MCF 10A (cell line): ENCODE measurements at regions of chr6 and their contacts with region 1.

Region 1: GRCh38 chr6:79453558-79454042 is 83.6 kb downstream of the LCA5 start:
- DNase-seq: peak; percentile 89
- H3K4me3 Mint-ChIP-seq: peak overlapping the region; percentile 61
- H3K27ac Mint-ChIP-seq: peak overlapping the region; percentile 94
- H3K4me1 Mint-ChIP-seq: peaks cover 33% of the 10 kb centered on the region
- H3K27me3 Mint-ChIP-seq: no peaks in the 10 kb centered on the region
- CTCF ChIP-seq: no peak

Region 2: DNA sequence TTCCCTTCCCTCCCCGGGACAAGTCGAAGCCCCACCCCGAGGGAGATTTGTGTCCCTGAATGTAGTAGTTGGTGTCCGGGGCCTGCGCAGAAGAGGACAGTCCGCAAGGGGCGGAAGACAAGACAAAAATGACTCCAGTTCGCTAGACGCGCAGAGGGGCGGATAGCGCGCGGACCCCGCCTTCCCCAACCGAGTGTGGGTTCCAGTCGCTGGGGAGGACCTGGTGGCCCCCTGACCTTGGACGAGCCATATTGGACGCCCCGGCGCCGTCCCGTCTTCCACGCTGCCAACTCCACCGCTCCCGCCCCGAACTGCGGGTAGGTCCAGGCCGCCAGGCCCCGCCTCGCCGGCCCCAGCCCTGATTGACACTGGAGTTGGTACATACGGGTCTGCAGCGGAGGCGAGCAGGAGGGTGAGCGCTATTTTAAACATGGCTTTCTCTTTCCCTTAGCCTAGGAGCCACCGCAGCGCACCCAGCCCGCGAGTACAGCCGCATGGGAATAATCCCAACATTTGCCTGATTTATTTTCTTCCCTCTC is 219.9 kb before region 1 on chr6:
- CTCF ChIA-PET with region 1: interaction called, 4 read pairs
- POLR2A ChIA-PET with region 1: interaction called, 5 read pairs
- intact Hi-C with region 1: loop called (anchors 5 kb)
- DNase-seq: peak; percentile 90
- H3K4me3 Mint-ChIP-seq: peak overlapping the region; percentile 88
- H3K27ac Mint-ChIP-seq: peak overlapping the region; percentile 81
- H3K4me1 Mint-ChIP-seq: peaks cover 13% of the 10 kb centered on the region
- H3K27me3 Mint-ChIP-seq: no peaks in the 10 kb centered on the region
- CTCF ChIP-seq: peak; percentile 19

Region 3: DNA sequence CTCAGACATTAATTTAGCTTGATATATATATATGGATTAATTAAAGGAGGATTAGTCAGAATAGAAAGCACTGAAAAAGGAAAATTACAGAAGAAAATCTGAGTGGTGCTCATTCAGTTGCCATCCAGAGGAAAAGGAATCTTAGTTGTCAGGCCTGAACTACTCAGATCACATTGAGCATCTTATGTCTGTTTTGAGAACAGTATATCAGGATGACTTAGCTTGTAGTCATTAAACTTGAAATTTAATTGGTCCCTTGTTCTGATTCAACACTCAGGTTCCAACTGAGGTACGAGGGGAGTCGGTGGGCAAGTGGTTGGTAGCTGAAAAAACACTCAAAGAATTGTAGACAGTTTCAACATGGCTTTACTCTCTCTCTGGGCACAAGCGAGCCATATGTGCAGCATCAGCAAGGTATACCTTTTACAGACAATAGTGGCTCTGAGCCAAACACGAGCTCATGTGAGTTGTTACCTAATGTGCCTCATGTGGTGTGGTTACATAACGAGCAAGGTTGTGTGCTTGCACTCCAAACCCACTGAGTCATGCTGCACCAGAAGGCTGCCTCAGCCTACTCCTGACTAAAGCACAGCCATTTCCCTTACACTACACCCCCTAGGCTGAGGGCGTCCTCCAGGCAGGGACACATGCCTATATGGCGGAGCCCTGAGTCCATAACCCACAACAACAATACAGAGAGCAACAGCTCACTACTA is 146.1 kb before region 1 on chr6:
- CTCF ChIA-PET with region 1: no interaction called
- POLR2A ChIA-PET with region 1: interaction called, 11 read pairs
- intact Hi-C with region 1: no loop called
- DNase-seq: peak; percentile 97
- H3K4me3 Mint-ChIP-seq: no peak overlapping the region
- H3K27ac Mint-ChIP-seq: peak overlapping the region; percentile 81
- H3K4me1 Mint-ChIP-seq: peaks cover 12% of the 10 kb centered on the region
- H3K27me3 Mint-ChIP-seq: no peaks in the 10 kb centered on the region
- CTCF ChIP-seq: no peak

Region 4: DNA sequence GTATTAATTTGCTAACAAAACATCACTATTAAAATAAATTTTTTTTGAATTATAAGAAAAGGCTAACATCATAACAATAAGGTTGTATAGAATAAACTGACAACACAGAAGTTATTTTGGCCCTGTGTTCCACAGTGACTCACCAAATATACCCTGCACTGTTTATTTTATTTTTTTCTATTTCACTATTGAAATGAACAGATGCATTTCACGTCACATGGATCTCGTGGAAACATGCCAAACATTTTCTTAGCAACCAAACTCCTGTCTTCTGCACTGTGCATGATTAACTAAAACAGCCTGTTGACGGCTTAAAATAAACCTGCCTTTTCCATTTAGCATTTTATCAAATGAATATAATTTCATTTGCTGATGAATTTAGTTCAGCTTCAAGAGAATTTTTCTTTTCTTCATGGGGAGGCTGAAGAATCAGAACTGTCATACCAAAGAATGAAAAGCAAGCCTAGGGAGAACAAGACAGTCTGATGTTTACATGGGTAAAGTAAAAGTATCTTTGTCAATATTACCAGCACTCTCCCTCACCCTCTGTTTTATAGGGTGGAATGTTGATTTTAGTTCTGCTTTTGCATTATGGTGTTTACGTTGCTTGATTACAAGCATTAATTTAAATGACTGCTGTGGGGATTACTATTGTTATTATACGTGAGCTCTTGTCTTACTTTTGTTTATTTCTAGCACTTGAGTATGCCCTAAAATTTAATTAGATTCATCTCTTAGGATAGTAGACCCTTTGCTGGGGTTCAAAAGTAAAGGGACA is 31.7 kb before region 1 on chr6:
- CTCF ChIA-PET with region 1: interaction called, 4 read pairs
- POLR2A ChIA-PET with region 1: interaction called, 33 read pairs
- intact Hi-C with region 1: no loop called
- DNase-seq: peak; percentile 95
- H3K4me3 Mint-ChIP-seq: peak overlapping the region; percentile 28
- H3K27ac Mint-ChIP-seq: peak overlapping the region; percentile 85
- H3K4me1 Mint-ChIP-seq: peaks cover 29% of the 10 kb centered on the region
- H3K27me3 Mint-ChIP-seq: no peaks in the 10 kb centered on the region
- CTCF ChIP-seq: no peak

Region 5: GRCh38 chr6:79466207-79466834 is 12.7 kb after region 1 on chr6:
- CTCF ChIA-PET with region 1: interaction called, 9 read pairs
- POLR2A ChIA-PET with region 1: interaction called, 13 read pairs
- intact Hi-C with region 1: no loop called
- DNase-seq: peak; percentile 48
- H3K4me3 Mint-ChIP-seq: no peak overlapping the region
- H3K27ac Mint-ChIP-seq: no peak overlapping the region
- H3K4me1 Mint-ChIP-seq: peaks cover 19% of the 10 kb centered on the region
- H3K27me3 Mint-ChIP-seq: no peaks in the 10 kb centered on the region
- CTCF ChIP-seq: peak; percentile 56